ENCODE measurements at regions of chr17 and their contacts with region 1.

Region 1: DNA sequence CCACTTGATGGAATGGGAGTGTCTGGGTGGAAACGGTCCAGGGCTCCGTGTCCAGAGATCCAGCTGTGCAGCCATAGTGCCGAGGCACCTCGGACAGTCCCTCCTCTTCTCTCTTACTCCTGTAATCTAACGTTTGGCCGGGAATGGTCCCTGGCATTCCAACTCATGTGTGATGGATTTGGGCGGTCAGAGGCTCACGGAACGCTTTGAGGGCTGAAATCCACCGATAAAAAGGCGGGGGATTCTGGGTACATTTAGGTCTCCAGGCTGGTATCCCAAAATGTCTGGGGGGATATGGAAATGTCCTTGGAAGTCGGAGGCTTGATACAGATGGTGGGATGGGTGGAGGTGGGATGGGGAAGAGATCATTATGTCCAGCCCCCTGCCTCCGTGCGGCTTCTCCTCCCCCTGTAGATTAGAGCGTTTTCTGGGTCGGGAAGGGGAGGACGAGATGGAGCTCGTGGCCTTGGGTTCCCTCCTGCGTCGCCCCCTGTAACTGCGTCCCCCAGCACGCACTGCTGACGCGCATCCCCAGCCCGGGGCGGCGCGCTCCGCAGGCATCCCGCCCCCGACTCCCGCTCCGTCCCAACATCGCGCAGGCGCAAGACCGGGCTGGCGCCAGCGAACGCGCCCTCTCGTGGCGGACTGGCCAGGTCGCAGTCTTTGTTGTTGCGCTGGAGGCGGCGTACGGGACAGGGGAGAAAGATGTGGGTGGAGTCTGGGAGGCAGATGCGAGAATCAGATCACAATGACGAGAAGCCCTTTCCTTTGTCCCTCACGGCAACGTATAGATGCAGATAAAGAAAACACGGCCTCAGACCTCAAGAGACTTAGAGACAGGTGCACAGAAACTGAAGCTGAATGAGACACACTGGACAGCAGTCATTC is 4.5 kb upstream of the SGCA start:
- DNase-seq: peak; percentile 98

Region 2: GRCh38 chr17:50139950-50140871 is 21.1 kb before region 1 on chr17:
- intact Hi-C with region 1: loop called (anchors 2 kb)
- DNase-seq: peak; percentile 93

Region 3: DNA sequence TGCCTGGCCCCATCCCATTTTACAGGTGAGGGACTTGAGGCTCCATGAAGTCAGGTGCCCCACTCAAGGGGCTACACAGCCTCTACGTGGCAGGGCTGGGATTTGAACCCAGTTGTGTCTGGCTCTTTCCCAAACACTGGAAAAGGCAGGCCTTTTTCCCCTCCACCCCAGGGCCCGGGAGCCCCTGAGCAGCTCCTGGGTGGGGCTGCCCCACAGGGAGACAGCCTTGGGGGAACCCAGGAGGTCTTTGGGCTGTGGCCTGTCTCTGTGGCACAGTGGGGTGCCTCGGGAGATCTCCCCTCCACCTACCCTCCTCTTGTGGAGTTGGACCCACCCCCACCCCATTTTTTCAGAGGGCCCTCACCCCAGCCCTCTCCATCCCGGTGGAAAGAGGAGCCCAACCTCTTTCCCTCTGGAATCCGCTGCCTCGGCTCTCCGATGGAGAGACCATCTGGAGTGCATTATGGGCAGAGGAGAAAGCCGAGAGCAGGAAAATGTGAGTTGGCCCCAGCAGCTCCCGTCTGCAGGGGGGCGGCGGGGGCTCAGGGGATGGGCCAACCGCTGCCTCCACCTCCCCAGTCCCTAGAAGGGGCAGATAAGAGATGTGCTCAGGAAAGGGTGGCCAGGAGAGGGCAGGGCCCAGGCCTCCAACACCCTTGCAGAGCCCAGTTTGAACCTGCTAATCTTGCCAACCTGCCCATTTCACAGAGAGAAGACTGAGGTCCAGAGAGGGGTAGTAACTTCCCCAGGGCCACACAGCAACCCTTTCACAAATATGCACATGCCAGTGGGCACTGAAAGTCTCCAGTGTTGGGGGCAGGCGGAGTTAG is 97.6 kb after region 1 on chr17:
- intact Hi-C with region 1: no loop called
- DNase-seq: peak; percentile 65